H1 (cell line): ENCODE measurements at regions of chr12 and their contacts with region 1.

Region 1: GRCh38 chr12:128190614-128191013 is 76.4 kb upstream of the TMEM132C start:
- DNase-seq: peak; percentile 31 to 85
- H3K4me3 ChIP-seq: no peak overlapping the region
- H3K27ac ChIP-seq: no peak overlapping the region
- H3K4me1 ChIP-seq: no peaks in the 10 kb centered on the region
- H3K27me3 ChIP-seq: no peaks in the 10 kb centered on the region
- CTCF ChIP-seq: peak; percentile 61 to 84 (median 82)
- EP300 ChIP-seq: no peak
- POLR2A ChIP-seq: no peak
- RAD21 ChIP-seq: peak; percentile 88 to 89

Region 2: GRCh38 chr12:127809275-127809674 is 381.3 kb before region 1 on chr12:
- CTCF ChIA-PET with region 1: no interaction called
- POLR2A ChIA-PET with region 1: no interaction called
- DNase-seq: no peak
- H3K4me3 ChIP-seq: no peak overlapping the region
- H3K27ac ChIP-seq: no peak overlapping the region
- H3K4me1 ChIP-seq: peaks cover 0 to 4% (median 2%) of the 10 kb centered on the region in 4 experiments; a peak in 1 of 7 replicates
- H3K27me3 ChIP-seq: no peaks in the 10 kb centered on the region
- CTCF ChIP-seq: no peak
- EP300 ChIP-seq: no peak
- POLR2A ChIP-seq: no peak
- RAD21 ChIP-seq: no peak

Region 3: GRCh38 chr12:128069359-128069997 is 121.1 kb before region 1 on chr12:
- CTCF ChIA-PET with region 1: interaction called, 13 read pairs
- POLR2A ChIA-PET with region 1: no interaction called
- DNase-seq: peak in 1 of 2 experiments; percentile 65
- H3K4me3 ChIP-seq: no peak overlapping the region
- H3K27ac ChIP-seq: no peak overlapping the region
- H3K4me1 ChIP-seq: no peaks in the 10 kb centered on the region
- H3K27me3 ChIP-seq: no peaks in the 10 kb centered on the region
- CTCF ChIP-seq: peak; percentile 12 to 84 (median 69)
- EP300 ChIP-seq: no peak
- POLR2A ChIP-seq: no peak
- RAD21 ChIP-seq: peak; percentile 87 to 91

Region 4: GRCh38 chr12:128133321-128134073 is 57.1 kb before region 1 on chr12:
- CTCF ChIA-PET with region 1: no interaction called
- POLR2A ChIA-PET with region 1: no interaction called
- DNase-seq: no peak
- H3K4me3 ChIP-seq: no peak overlapping the region
- H3K27ac ChIP-seq: no peak overlapping the region
- H3K4me1 ChIP-seq: 0 out of 7 replicates have a peak, but pooled peaks cover 0 to 2% (median 0%) of the 10 kb centered on the region in 4 experiments
- H3K27me3 ChIP-seq: no peaks in the 10 kb centered on the region
- CTCF ChIP-seq: no peak
- EP300 ChIP-seq: no peak
- POLR2A ChIP-seq: no peak
- RAD21 ChIP-seq: no peak

Region 5: GRCh38 chr12:128204711-128205110 is 14.1 kb after region 1 on chr12:
- CTCF ChIA-PET with region 1: interaction called, 11 read pairs
- POLR2A ChIA-PET with region 1: no interaction called
- DNase-seq: no peak
- H3K4me3 ChIP-seq: no peak overlapping the region
- H3K27ac ChIP-seq: no peak overlapping the region
- H3K4me1 ChIP-seq: no peaks in the 10 kb centered on the region
- H3K27me3 ChIP-seq: no peaks in the 10 kb centered on the region
- CTCF ChIP-seq: no peak
- EP300 ChIP-seq: no peak
- POLR2A ChIP-seq: no peak
- RAD21 ChIP-seq: no peak

Region 6: GRCh38 chr12:128224226-128224625 is 33.6 kb after region 1 on chr12:
- CTCF ChIA-PET with region 1: interaction called, 13 read pairs
- POLR2A ChIA-PET with region 1: no interaction called
- DNase-seq: no peak
- H3K4me3 ChIP-seq: no peak overlapping the region
- H3K27ac ChIP-seq: no peak overlapping the region
- H3K4me1 ChIP-seq: 0 out of 7 replicates have a peak, but pooled peaks cover 0 to 3% (median 0%) of the 10 kb centered on the region in 4 experiments
- H3K27me3 ChIP-seq: no peaks in the 10 kb centered on the region
- CTCF ChIP-seq: no peak
- EP300 ChIP-seq: no peak
- POLR2A ChIP-seq: no peak
- RAD21 ChIP-seq: no peak